SK-N-SH (cell line): ENCODE measurements at regions of chr16 and their contacts with region 1.

Region 1: GRCh38 chr16:87416826-87417527 is 24.8 kb downstream of the MAP1LC3B start:
- DNase-seq: peak; percentile 73
- H3K4me3 ChIP-seq: no peak overlapping the region
- H3K27ac ChIP-seq: no peak overlapping the region; a peak in 1 of 4 replicates
- H3K4me1 ChIP-seq: peaks cover 0 to 3% of the 10 kb centered on the region in 2 experiments; a peak in 1 of 4 replicates
- H3K27me3 ChIP-seq: no peaks in the 10 kb centered on the region
- CTCF ChIP-seq: peak; percentile 94
- EP300 ChIP-seq: no peak
- RAD21 ChIP-seq: peak; percentile 85

Region 2: DNA sequence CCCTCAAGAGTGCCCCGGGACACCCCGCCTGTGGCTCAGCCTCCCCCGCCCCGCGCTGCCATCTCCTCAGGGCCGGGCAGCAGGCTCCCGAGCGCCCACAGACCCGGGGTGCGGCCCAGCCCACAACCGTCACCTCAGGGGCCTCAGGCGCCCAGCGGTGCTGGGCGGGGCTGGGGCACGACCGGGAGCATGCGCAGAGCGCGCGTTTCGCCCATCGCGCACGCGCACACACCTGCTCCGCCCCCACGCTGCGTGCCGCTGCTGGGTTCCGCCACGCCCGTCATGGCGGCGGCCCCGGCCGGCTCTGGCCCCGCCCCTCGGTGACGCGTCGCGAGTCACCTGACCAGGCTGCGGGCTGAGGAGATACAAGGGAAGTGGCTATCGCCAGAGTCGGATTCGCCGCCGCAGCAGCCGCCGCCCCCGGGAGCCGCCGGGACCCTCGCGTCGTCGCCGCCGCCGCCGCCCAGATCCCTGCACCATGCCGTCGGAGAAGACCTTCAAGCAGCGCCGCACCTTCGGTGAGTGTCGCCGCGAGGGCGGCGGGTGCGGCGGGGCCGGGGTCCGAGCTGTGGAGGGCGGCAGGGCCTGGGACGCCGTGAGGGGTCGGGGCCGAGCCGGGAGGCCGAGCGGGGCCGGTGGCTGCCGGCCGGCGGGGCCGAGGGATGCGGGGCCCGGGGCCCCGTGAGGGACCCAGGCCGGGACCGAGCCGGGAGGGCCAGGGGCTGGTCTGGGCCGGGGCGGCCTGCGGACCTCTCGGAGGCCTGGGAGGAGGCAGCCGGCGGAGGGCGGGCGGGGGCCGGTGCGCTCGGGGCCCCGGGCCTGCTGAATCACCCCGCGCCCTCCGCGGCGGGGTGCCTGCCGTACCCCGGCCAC is 24.8 kb before region 1 on chr16 and contains the start of gene MAP1LC3B:
- CTCF ChIA-PET with region 1: interaction called, 13 read pairs
- POLR2A ChIA-PET with region 1: no interaction called
- DNase-seq: peak; percentile 98
- H3K4me3 ChIP-seq: peak within 1 kb of the TSS; percentile 78 to 79
- H3K27ac ChIP-seq: peak within 1 kb of the TSS; percentile 74 to 93
- H3K4me1 ChIP-seq: peaks cover 19 to 27% of the 10 kb centered on the region in 2 experiments
- H3K27me3 ChIP-seq: no peaks in the 10 kb centered on the region
- CTCF ChIP-seq: no peak
- EP300 ChIP-seq: no peak
- RAD21 ChIP-seq: no peak
- polyA plus RNA-seq, gene MAP1LC3B: 33.7 and 36.9 TPM in 2 replicates

Region 3: DNA sequence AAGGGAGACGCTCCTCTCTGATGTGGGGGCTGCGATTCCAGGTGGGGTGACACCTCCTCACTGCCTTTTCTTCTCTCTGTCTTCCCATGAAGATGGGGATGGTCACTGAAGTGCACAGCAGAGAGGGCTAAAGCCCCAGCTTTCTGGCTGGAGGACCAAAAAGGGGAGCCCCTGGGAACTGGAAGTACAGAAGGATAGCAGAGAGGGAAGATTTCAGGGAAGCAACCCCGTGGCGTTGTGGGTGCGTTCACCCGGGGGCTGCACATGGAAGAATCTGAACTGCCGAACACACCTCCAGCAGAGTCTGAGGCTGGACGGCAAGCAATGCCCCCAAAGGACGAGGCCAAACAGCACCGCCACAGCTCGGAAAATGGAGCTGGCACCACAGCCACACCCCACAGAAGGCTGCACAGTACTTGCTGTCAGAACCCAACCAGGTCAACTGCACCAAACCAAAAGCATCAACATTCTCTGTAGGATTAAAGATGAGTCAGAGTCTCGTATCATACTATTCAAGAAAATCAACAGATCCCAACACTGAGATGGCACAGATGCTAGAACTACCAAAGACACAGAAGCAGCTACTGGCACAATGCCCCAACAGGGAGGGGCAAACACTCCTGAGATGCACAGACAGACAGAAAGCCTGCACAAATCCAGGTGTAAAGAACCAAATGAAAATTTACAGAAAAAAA is 25.1 kb after region 1 on chr16:
- CTCF ChIA-PET with region 1: interaction called, 13 read pairs
- POLR2A ChIA-PET with region 1: no interaction called
- DNase-seq: no peak
- H3K4me3 ChIP-seq: no peak overlapping the region
- H3K27ac ChIP-seq: peak overlapping the region in 1 of 2 experiments; percentile 18; a peak in 1 of 4 replicates
- H3K4me1 ChIP-seq: peaks cover 5% of the 10 kb centered on the region in 2 experiments; a peak in 2 of 4 replicates
- H3K27me3 ChIP-seq: no peaks in the 10 kb centered on the region
- CTCF ChIP-seq: no peak
- EP300 ChIP-seq: no peak
- RAD21 ChIP-seq: no peak

Region 4: DNA sequence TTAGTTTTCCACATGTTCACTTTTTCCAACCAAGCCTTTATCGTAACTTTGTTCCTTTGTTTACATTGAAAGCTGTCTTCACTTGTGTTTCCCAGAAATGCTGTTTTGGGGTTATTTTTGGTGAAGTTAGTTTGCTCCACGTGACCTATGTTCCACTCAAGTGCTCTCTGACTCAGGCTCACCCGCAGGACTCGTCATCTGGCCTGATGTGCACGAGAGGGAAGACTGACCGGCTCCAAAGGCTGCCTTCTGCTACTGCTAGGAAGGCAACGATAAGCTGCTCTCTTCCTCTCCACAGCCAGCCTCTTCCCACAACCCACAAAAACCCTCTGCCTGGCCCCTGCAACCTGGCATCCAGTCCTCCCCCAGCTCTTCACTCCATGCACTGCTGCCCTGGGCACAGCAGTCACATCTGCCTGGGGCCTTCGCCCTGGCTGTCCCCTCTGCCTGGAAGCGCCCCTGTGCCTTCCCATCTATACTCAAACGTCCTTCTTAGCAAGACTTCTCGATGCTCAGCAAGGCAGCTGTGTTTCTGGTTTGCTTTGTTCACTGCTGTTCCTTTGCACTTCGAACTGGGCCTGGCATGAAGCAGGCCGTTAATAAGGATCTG is 47.8 kb after region 1 on chr16:
- CTCF ChIA-PET with region 1: interaction called, 13 read pairs
- POLR2A ChIA-PET with region 1: no interaction called
- DNase-seq: peak; percentile 58
- H3K4me3 ChIP-seq: peak overlapping the region in 1 of 2 experiments; percentile 38; a peak in 2 of 4 replicates
- H3K27ac ChIP-seq: peak overlapping the region; percentile 92 to 95
- H3K4me1 ChIP-seq: peaks cover 40 to 71% of the 10 kb centered on the region in 2 experiments
- H3K27me3 ChIP-seq: no peaks in the 10 kb centered on the region
- CTCF ChIP-seq: no peak
- EP300 ChIP-seq: no peak; a peak in 1 of 4 replicates
- RAD21 ChIP-seq: no peak

Region 5: DNA sequence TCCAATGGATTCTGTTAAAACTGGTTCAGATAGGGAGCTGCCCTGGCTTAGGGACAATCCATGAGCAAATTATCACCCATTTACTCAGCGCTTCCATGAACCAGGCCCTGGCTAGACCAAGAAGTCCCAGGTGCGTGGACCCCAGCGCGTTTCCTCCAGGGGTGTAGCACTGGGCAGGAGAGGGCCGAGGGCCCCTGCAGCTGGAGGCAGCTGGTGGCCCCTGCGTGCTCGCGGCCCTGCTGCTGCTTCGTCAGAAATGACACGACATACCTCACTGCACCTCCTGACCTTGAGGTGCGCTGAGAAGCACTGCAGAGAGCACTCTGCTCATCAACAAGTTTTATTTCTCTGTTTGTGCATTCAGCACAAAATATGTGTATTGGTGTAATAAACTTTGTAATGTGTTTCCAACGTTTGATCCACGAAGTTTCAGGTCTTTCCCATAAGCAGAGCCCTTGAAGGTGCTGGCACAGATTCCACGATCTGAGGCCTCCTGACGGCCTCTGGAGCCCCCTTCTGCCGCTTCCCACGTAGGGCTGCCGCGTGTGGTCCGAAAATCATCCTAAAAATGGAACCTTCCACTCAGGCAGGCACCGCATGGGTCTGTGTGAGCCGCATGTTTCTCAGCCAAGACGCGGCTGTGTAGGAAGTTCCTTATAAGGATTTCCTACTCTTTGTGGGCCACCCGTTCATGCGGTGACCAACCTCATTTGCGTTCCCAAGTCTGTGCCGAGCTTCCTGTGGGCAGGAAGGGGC is 126.6 kb after region 1 on chr16:
- CTCF ChIA-PET with region 1: interaction called, 10 read pairs
- POLR2A ChIA-PET with region 1: no interaction called
- DNase-seq: no peak
- H3K4me3 ChIP-seq: no peak overlapping the region
- H3K27ac ChIP-seq: no peak overlapping the region
- H3K4me1 ChIP-seq: no peaks in the 10 kb centered on the region; a peak in 1 of 4 replicates
- H3K27me3 ChIP-seq: peaks cover under 1% of the 10 kb centered on the region; the same call in 1 of the 2 replicates
- CTCF ChIP-seq: 0 out of 2 replicates have a peak, but pooled peaks have one; percentile 7
- EP300 ChIP-seq: no peak
- RAD21 ChIP-seq: peak; percentile 18; the same call in 1 of the 2 replicates